Activated CD4-positive, alpha-beta T cell treated with anti-CD3 and anti-CD28 coated beads, Interleukin-2, amount 10 ng/mL, durations not matched to agents 24 days and 14 days (primary cell): ENCODE measurements at regions of chr3 and their contacts with region 1.

Region 1: DNA sequence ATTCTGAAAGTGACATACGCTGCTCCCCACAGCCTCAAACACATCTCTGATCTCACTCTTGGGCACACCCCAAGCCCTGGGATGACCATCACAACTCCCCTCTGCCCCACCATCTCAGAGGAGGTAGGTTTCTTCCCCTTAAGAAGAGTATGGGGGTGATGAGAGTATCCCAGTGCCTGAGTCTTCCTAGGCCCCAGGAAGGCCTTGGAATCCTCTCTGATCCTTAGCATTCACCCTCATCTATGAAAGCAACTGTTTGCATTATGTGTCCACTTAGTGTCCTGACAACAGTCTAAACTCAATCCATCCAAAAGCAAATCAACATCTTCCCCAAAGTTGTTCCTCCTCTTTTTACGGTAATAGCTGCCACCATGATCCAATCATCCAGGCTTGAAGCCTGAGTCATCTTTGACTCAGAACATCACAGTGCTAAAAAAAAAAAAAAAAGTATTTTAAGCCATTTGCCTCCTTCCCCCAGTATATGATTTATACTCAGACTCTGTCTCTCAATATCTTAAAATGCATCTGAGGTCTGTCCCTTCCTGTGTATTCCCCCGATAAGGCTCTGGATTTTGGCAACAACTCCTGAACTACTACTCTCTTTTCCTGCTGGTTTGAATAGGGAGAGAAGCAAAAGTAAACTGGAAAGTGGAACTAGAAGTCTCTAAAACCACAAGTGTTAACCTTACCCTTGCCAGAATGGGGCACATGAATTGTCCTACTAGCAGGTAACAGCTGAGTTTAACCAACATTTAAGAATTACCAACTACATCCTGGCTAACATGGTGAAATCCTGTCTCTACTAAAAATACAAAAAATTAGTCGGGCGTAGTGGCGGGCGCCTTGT is 22.5 kb downstream of the POPDC2 start:
- DNase-seq: peak; percentile 68
- H3K4me3 Mint-ChIP-seq: peak overlapping the region; percentile 75
- H3K27ac Mint-ChIP-seq: peak overlapping the region; percentile 95
- H3K4me1 Mint-ChIP-seq: peaks cover 36% of the 10 kb centered on the region
- H3K27me3 Mint-ChIP-seq: no peaks in the 10 kb centered on the region

Region 2: GRCh38 chr3:119225121-119225520 is 412.8 kb before region 1 on chr3:
- intact Hi-C with region 1: no loop called
- DNase-seq: no peak
- H3K4me3 Mint-ChIP-seq: no peak overlapping the region
- H3K27ac Mint-ChIP-seq: no peak overlapping the region
- H3K4me1 Mint-ChIP-seq: peaks cover 9% of the 10 kb centered on the region
- H3K27me3 Mint-ChIP-seq: no peaks in the 10 kb centered on the region

Region 3: DNA sequence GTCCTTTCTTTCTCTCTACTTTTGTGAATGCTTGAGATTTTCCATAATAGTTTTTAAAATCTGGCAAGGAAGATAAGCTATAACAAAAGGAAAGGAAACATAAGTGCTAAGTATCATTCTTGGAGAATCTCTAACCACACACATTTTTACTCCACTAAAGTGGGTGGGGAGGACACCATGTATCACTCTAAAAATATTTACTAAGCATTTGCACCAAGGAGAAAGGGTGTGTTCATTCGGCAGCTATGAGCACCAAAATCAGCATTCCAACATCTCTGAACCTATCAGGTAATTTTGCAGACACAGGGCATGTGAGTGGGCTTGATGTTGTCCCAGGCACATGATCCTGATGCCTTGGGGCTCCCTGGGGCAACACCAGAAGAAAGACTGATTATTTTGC is 402.8 kb before region 1 on chr3:
- intact Hi-C with region 1: loop called (anchors 5 kb)
- DNase-seq: no peak
- H3K4me3 Mint-ChIP-seq: no peak overlapping the region
- H3K27ac Mint-ChIP-seq: peak overlapping the region; percentile 45
- H3K4me1 Mint-ChIP-seq: peaks cover 48% of the 10 kb centered on the region
- H3K27me3 Mint-ChIP-seq: no peaks in the 10 kb centered on the region

Region 4: GRCh38 chr3:119463171-119464169 is 174.4 kb before region 1 on chr3 and contains the start of gene TMEM39A:
- intact Hi-C with region 1: loop called (anchors 1 kb)
- DNase-seq: peak; percentile 100
- H3K4me3 Mint-ChIP-seq: peak within 1 kb of the TSS; percentile 99
- H3K27ac Mint-ChIP-seq: peak within 1 kb of the TSS; percentile 96
- H3K4me1 Mint-ChIP-seq: peaks cover 30% of the 10 kb centered on the region
- H3K27me3 Mint-ChIP-seq: peaks cover 2% of the 10 kb centered on the region
- total RNA-seq, gene TMEM39A: 44.0 and 52.2 TPM in 2 replicates

Region 5: DNA sequence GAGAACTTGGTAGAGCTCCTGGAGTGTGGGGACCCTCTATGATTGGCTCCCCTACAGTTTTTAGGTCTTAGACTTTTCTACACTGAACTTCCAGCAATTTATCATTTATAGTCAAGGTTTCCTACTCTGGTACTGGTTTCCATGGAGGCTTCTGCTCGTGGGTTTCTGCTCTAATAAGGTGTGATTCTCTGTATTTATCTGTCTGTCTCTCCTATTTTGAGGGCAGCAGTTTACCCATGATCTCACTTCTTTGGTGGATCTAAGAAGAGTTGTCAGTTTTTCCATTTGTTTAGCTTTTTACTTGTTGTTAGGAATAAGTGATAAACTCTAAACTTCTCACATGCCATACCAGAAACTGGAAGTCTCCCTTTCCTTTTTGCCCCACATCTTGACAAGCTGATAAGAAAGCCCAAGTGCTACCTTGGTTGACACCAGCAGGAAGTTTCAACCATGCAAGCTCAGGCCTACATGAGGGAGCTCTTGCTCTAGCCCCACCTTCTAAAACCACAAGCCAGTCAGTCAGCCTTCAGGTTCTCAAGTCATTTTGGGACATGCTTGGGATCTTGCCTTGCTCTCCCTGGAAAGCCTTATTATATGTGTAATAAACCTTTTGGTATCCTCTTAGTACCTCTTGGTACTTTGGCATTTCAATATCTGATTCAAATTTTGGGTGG is 129.6 kb before region 1 on chr3:
- intact Hi-C with region 1: loop called (anchors 1 kb)
- DNase-seq: peak; percentile 79
- H3K4me3 Mint-ChIP-seq: peak overlapping the region; percentile 41
- H3K27ac Mint-ChIP-seq: peak overlapping the region; percentile 90
- H3K4me1 Mint-ChIP-seq: peaks cover 40% of the 10 kb centered on the region
- H3K27me3 Mint-ChIP-seq: no peaks in the 10 kb centered on the region

Region 6: GRCh38 chr3:119579366-119580165 is 58.3 kb before region 1 on chr3 and contains the start of gene ADPRH:
- intact Hi-C with region 1: loop called (anchors 5 kb)
- DNase-seq: peak; percentile 86
- H3K4me3 Mint-ChIP-seq: peak within 1 kb of the TSS; percentile 85
- H3K27ac Mint-ChIP-seq: peak within 1 kb of the TSS; percentile 93
- H3K4me1 Mint-ChIP-seq: peaks cover 25% of the 10 kb centered on the region
- H3K27me3 Mint-ChIP-seq: no peaks in the 10 kb centered on the region
- total RNA-seq, gene ADPRH: 3.6 and 4.2 TPM in 2 replicates

Region 7: GRCh38 chr3:119702530-119703157 is 64.7 kb after region 1 on chr3 and contains the start of gene CFAP91:
- intact Hi-C with region 1: loop called (anchors 1 kb)
- DNase-seq: peak; percentile 94
- H3K4me3 Mint-ChIP-seq: peak within 1 kb of the TSS; percentile 83
- H3K27ac Mint-ChIP-seq: peak within 1 kb of the TSS; percentile 40
- H3K4me1 Mint-ChIP-seq: peaks cover 29% of the 10 kb centered on the region
- H3K27me3 Mint-ChIP-seq: peaks cover 27% of the 10 kb centered on the region
- total RNA-seq, gene CFAP91: 0.26 TPM in 1 of 2 replicates, not detected in the other